HCT116 (cell line): ENCODE measurements at regions of chr19 and their contacts with region 1.

Region 1: DNA sequence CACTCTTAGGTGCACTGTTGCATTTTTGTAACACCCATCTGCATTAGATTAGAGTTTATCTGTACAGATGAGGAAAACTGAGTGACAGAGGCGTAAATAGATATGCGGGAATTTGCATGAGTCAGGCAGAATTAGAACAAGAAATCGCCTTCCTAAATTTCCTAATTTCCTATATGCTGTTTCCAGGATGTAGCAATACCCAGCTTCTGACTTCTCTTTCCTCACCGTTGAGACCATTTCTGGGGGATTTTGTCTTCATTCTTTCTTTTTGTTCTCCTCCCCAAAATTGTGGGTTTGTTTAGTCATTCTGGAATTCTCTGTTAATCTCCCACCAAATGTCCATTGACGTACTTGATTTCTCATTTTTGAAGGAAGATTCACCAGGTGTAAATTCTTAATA is 10.6 kb upstream of the ZNF792 start:
- DNase-seq: no peak
- ATAC-seq: no peak
- H3K4me3 ChIP-seq: no peak overlapping the region
- H3K27ac ChIP-seq: no peak overlapping the region
- H3K4me1 ChIP-seq: peaks cover 0 to 5% of the 10 kb centered on the region in 2 experiments; a peak in 1 of 4 replicates
- H3K27me3 ChIP-seq: no peaks in the 10 kb centered on the region
- CTCF ChIP-seq: no peak
- POLR2A ChIP-seq: no peak
- RAD21 ChIP-seq: no peak

Region 2: DNA sequence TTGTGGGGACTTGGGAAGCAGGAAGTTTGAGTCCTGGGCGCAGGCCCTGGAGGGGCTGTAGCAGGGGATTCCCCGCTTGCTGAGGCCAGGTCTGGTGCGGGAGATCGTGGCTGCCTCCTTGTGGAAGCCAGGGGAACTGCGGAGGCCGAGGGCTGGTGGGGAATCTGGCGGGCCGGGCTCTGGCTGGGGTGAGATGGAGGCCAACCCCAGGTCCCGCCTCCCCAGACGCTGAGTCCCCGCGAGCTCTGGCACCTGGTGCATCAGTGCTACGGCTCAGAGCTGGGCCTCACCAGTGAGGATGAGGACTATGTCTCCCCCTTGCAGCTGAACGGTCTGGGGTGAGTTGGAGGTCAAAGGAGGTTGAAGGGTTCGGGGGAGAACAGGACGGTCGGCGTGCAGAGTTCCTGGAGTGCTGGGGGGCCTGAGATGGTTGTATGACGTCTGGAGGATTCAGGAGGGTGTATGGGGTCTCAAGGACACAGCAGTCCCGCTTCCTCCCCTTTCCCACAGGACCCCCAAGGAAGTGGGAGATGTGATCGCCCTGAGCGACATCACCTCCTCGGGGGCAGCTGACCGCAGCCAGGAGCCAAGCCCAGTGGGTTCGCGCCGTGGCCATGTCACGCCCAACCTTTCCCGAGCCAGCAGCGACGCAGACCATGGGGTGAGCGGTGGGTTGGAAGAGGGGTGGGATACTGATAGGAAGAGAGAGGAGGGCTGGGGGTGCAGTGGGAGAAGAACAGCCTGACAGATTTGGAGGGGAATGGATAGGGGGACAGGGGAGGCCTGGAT is 38.6 kb after region 1 on chr19:
- CTCF ChIA-PET with region 1: no interaction called
- POLR2A ChIA-PET with region 1: no interaction called
- RAD21 ChIA-PET with region 1: no interaction called
- intact Hi-C with region 1: loop called (anchors 1 kb)
- DNase-seq: no peak
- ATAC-seq: peak; percentile 77
- H3K4me3 ChIP-seq: no peak overlapping the region
- H3K27ac ChIP-seq: no peak overlapping the region
- H3K4me1 ChIP-seq: no peaks in the 10 kb centered on the region
- H3K27me3 ChIP-seq: no peaks in the 10 kb centered on the region
- CTCF ChIP-seq: peak; percentile 69 to 93 (median 83)
- POLR2A ChIP-seq: no peak
- RAD21 ChIP-seq: peak; percentile 78

Region 3: DNA sequence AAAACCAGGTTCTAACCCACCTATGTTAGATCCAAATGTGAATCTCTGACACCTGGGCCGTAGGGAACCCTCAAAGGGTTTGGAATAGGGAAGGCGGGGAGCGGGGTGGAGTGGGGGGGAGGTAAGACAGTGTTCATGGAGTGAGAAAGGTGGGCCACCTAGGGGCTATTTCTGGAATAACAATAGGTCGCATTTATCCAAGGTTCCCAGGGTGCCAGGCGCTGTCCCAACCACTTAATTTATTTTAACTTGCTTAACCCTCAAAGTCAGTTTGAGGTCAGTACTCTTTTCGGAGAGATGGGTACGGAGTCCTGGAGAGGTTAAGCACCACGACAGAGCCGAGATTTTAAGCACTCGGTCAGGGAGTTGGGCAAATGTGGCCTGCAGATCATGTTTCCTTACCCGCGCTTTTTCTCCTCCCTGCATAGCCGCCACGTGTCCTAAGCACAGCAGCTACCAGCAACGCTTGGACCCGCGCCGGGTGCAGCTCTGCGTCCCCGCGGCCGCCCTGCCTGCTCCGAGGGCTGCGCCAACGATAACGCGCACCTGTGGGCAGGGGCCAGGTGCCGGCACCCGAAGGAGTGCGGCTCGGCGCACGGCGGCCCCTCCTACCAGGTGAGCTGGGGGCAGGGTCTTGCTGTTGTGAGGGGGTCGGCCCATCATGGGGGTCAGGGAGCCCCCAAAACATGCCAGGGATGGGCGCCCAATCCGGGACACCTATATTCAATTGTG is 116.0 kb after region 1 on chr19:
- CTCF ChIA-PET with region 1: no interaction called
- POLR2A ChIA-PET with region 1: no interaction called
- RAD21 ChIA-PET with region 1: no interaction called
- intact Hi-C with region 1: loop called (anchors 1 kb)
- DNase-seq: peak; percentile 48
- ATAC-seq: peak; percentile 94
- H3K4me3 ChIP-seq: no peak overlapping the region
- H3K27ac ChIP-seq: no peak overlapping the region
- H3K4me1 ChIP-seq: peaks cover 0 to 17% of the 10 kb centered on the region in 2 experiments; a peak in 2 of 4 replicates
- H3K27me3 ChIP-seq: no peaks in the 10 kb centered on the region
- CTCF ChIP-seq: peak; percentile 52 to 70 (median 67); a peak in 5 of 6 replicates
- POLR2A ChIP-seq: no peak
- RAD21 ChIP-seq: peak; percentile 72

Region 4: DNA sequence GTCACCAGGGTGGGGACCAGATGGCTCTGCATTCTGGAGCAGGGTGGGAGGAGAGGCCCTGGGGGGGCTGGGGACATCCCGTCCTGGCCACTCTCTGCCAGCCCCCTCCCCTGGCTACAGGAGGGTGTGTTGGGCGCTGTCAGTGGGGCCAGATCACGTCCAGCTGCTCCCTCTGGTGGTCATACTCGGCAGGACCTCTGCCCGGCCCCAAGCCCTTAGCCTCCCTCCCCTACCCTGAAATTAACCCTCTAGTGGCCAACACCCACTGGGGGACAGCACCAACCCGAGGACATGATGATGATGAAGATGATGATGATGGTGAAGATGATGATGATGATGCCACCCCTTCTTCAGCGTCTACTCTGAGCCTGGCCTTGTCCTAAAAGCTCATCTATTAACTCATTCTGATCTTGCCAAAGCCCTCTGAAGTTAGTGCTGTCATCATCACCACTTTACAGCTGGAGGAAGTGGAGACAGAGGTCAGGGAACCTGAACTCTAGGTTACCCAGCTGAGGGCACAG is 160.8 kb after region 1 on chr19:
- CTCF ChIA-PET with region 1: no interaction called
- POLR2A ChIA-PET with region 1: no interaction called
- RAD21 ChIA-PET with region 1: no interaction called
- intact Hi-C with region 1: loop called (anchors 10 kb)
- DNase-seq: peak; percentile 51
- ATAC-seq: peak; percentile 97
- H3K4me3 ChIP-seq: no peak overlapping the region
- H3K27ac ChIP-seq: no peak overlapping the region
- H3K4me1 ChIP-seq: no peaks in the 10 kb centered on the region; a peak in 1 of 4 replicates
- H3K27me3 ChIP-seq: no peaks in the 10 kb centered on the region
- CTCF ChIP-seq: peak; percentile 83 to 88 (median 87)
- POLR2A ChIP-seq: no peak
- RAD21 ChIP-seq: peak; percentile 84